H1 (cell line): ENCODE measurements at regions of chr7 and their contacts with region 1.

Region 1: GRCh38 chr7:131688738-131689661 is 132.6 kb upstream of the PODXL start:
- DNase-seq: peak; percentile 75 to 95
- H3K4me3 ChIP-seq: no peak overlapping the region
- H3K27ac ChIP-seq: no peak overlapping the region
- H3K4me1 ChIP-seq: peaks cover 0 to 9% (median 2%) of the 10 kb centered on the region in 4 experiments; a peak in 5 of 7 replicates
- H3K27me3 ChIP-seq: peaks cover 0 to 7% (median 3%) of the 10 kb centered on the region in 4 experiments; a peak in 1 of 7 replicates
- CTCF ChIP-seq: peak; percentile 96 to 99 (median 99)
- EP300 ChIP-seq: no peak
- POLR2A ChIP-seq: no peak
- RAD21 ChIP-seq: peak; percentile 99 to 100

Region 2: DNA sequence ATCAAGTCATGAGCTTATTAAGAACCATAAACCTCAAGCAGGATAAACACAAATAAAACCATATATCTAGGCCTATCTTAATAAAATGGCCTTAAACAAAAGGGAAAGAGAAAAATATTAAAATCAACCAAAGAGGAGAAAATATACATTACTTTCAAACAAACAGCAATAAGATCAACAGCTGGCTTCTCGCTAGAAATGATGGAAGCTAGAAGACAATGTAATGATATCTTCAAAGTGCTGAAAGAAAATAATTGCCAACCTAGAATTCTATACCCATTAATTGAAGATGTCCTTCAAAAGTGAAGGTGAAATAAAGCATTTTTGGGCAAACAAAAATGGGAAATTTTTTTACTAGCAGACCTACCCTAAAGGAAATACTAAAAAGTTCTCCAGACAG is 10.3 kb after region 1 on chr7:
- CTCF ChIA-PET with region 1: interaction called, 66 read pairs
- POLR2A ChIA-PET with region 1: no interaction called
- DNase-seq: no peak
- H3K4me3 ChIP-seq: no peak overlapping the region
- H3K27ac ChIP-seq: no peak overlapping the region
- H3K4me1 ChIP-seq: no peaks in the 10 kb centered on the region
- H3K27me3 ChIP-seq: no peaks in the 10 kb centered on the region
- CTCF ChIP-seq: no peak
- EP300 ChIP-seq: no peak
- POLR2A ChIP-seq: no peak
- RAD21 ChIP-seq: no peak

Region 3: DNA sequence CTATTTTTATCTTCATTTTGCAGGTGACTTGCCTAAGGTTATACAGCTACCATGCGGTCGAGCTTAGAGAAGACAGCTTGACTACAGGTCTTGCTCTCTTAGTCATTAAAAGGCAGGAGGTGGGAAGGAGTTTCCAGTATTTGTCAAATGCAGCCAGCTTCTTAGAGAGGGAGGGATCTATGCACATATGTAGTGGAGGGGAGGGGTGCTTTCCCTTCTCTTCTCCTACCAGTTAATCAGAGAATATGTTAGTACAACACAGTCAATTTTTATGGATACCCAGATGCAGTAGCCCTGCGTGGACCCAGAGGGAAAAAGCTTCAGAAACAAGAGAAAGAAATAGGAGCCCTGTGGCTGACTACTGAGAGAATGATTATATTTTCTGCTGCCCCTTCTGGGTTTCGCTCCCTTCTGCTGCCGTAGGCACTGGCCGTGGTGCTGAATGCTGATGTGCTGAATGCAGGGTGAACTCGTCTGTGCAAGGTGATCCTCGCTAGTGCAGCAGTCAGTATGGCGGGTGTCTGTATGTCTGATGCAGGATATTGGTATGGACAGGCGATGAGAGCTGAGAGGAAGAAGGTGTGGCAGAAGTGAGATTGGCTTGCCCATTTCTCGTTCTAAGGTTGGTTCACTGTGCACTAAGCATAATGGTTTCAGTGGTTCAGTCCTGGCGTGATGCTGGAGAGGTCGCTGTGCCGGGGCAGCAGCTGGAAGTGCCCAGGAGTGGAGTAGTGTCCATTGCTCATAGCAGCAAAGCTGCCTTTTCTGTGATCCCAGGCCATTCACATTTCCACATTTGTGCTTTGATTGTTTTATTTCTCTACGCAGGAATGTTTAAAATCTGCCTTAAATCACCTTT is 56.6 kb after region 1 on chr7:
- CTCF ChIA-PET with region 1: interaction called, 12 read pairs
- POLR2A ChIA-PET with region 1: interaction called, 6 read pairs
- DNase-seq: peak in 1 of 2 experiments; percentile 86
- H3K4me3 ChIP-seq: no peak overlapping the region
- H3K27ac ChIP-seq: no peak overlapping the region
- H3K4me1 ChIP-seq: peaks cover 0 to 7% (median 0%) of the 10 kb centered on the region in 4 experiments; a peak in 1 of 7 replicates
- H3K27me3 ChIP-seq: no peaks in the 10 kb centered on the region
- CTCF ChIP-seq: no peak
- EP300 ChIP-seq: no peak
- POLR2A ChIP-seq: no peak
- RAD21 ChIP-seq: 0 out of 4 replicates have a peak, but pooled peaks of 1 of the 2 experiments have one; percentile 2

Region 4: DNA sequence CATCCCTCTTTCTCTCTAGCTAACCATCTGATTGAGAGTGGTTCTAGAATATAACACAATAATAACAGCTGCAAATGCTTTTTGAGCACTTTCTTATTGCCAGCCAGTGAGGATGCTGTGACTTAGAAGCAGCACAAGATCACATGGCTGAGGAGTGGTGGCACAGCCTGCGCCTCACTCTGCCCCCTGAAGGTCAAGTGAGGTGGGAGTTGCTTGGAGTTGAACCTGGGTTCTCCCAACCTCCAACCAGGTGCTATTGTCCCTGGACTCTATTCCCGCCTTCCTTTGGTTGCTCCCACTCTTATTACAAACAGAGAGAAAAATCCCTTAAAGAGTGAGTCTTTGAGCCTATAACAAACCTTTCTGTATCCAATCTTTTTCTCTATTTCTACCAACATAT is 147.7 kb after region 1 on chr7:
- CTCF ChIA-PET with region 1: interaction called, 26 read pairs
- POLR2A ChIA-PET with region 1: no interaction called
- DNase-seq: peak in 1 of 2 experiments; percentile 29
- H3K4me3 ChIP-seq: no peak overlapping the region
- H3K27ac ChIP-seq: no peak overlapping the region
- H3K4me1 ChIP-seq: no peaks in the 10 kb centered on the region
- H3K27me3 ChIP-seq: no peaks in the 10 kb centered on the region
- CTCF ChIP-seq: peak; percentile 67 to 84 (median 75)
- EP300 ChIP-seq: no peak
- POLR2A ChIP-seq: no peak
- RAD21 ChIP-seq: peak; percentile 49 to 65; a peak in 3 of 4 replicates

Region 5: DNA sequence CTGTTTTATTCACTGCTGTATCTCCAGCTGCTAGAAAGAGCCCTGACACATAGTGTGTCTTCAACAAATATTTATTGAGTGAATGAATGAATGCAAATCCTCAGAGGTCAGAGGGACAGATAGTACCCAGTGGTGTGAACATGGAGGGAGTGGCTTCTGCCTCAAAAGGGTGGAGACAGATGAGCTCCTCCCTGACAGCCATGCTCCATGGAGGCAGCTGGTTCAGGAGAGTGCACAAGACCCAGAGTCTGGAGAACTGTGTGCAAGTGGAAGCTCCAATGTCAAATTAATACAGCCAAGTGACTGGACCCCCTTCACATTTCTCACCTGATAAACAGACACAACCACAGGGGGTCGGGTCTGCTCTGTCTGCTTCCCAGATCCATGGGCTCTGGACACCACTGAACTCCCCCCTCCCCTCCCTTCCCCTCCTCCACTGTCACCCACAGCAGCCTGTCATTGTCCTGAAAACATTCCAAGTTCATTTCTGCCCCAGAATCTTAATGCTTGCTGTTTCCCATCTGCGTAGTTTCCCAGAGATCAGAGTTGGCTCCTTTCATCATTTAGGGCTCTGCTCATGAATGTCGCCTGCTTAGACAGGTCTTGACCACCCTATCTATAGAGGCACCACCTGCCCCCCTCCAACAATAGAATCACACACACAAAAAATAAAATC is 180.3 kb after region 1 on chr7:
- CTCF ChIA-PET with region 1: interaction called, 13 read pairs
- POLR2A ChIA-PET with region 1: interaction called, 3 read pairs
- DNase-seq: no peak
- H3K4me3 ChIP-seq: no peak overlapping the region
- H3K27ac ChIP-seq: no peak overlapping the region
- H3K4me1 ChIP-seq: no peaks in the 10 kb centered on the region
- H3K27me3 ChIP-seq: no peaks in the 10 kb centered on the region; a peak in 1 of 7 replicates
- CTCF ChIP-seq: no peak
- EP300 ChIP-seq: no peak
- POLR2A ChIP-seq: no peak
- RAD21 ChIP-seq: no peak

Region 6: GRCh38 chr7:131945313-131945911 is 256.4 kb after region 1 on chr7:
- CTCF ChIA-PET with region 1: interaction called, 16 read pairs
- POLR2A ChIA-PET with region 1: no interaction called
- DNase-seq: peak; percentile 46 to 90
- H3K4me3 ChIP-seq: peak overlapping the region in 1 of 4 experiments; percentile 33; a peak in 3 of 8 replicates
- H3K27ac ChIP-seq: no peak overlapping the region
- H3K4me1 ChIP-seq: no peaks in the 10 kb centered on the region; a peak in 1 of 7 replicates
- H3K27me3 ChIP-seq: peaks cover 0 to 14% (median 6%) of the 10 kb centered on the region in 4 experiments; a peak in 3 of 7 replicates
- CTCF ChIP-seq: peak; percentile 69 to 98 (median 81)
- EP300 ChIP-seq: no peak; a peak in 1 of 3 replicates
- POLR2A ChIP-seq: no peak
- RAD21 ChIP-seq: peak; percentile 97 to 99

Region 7: GRCh38 chr7:132106491-132106890 is 417.5 kb after region 1 on chr7:
- CTCF ChIA-PET with region 1: no interaction called
- POLR2A ChIA-PET with region 1: no interaction called
- DNase-seq: no peak
- H3K4me3 ChIP-seq: no peak overlapping the region
- H3K27ac ChIP-seq: no peak overlapping the region
- H3K4me1 ChIP-seq: peaks cover 4 to 8% (median 6%) of the 10 kb centered on the region in 4 experiments; a peak in 6 of 7 replicates
- H3K27me3 ChIP-seq: no peaks in the 10 kb centered on the region
- CTCF ChIP-seq: no peak
- EP300 ChIP-seq: no peak
- POLR2A ChIP-seq: no peak
- RAD21 ChIP-seq: no peak